GM13976 (cell line): ENCODE measurements at regions of chr17 and their contacts with region 1.

Region 1: DNA sequence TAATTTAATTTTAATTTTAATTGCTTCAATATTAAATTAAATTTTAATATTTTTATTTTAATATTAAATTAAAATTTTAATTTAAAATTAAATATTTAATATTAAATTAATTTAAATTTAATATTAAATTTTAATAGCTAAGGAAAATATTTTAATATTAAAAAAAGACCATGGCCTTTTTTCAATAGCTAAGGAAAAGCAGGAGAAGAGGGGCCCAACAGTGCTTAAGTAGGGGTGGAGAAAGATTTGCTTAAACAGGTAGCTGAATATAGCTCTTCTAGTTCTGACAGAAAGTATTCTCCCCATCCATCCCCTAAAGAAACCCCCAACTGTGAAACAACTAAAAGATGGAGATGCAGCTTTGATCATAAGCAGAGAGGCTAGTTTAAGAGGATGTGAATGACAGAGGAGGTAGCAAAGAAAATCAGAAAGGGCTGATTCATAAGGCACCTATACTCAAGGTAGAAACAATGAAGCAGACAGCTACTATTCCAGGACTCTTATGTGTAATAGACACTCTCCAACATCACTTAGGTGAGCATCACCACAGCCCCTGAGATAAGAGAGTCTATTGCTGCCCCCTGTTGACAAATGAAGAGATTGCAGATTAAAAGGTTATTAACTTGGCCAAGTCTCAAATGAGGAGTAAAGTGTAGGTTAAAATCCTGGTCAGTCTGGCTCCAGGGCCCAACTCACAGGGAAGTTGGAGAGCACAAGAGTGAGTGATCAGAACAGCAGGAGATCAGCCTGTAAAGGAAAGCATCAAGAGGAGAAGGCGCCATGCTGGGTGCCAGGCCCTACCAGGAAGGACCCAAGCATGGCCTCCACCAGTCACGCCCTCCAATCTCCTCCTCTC is 7.8 kb upstream of the RNASEK start:
- DNase-seq: peak; percentile 76
- CTCF ChIP-seq: peak; percentile 57

Region 2: DNA sequence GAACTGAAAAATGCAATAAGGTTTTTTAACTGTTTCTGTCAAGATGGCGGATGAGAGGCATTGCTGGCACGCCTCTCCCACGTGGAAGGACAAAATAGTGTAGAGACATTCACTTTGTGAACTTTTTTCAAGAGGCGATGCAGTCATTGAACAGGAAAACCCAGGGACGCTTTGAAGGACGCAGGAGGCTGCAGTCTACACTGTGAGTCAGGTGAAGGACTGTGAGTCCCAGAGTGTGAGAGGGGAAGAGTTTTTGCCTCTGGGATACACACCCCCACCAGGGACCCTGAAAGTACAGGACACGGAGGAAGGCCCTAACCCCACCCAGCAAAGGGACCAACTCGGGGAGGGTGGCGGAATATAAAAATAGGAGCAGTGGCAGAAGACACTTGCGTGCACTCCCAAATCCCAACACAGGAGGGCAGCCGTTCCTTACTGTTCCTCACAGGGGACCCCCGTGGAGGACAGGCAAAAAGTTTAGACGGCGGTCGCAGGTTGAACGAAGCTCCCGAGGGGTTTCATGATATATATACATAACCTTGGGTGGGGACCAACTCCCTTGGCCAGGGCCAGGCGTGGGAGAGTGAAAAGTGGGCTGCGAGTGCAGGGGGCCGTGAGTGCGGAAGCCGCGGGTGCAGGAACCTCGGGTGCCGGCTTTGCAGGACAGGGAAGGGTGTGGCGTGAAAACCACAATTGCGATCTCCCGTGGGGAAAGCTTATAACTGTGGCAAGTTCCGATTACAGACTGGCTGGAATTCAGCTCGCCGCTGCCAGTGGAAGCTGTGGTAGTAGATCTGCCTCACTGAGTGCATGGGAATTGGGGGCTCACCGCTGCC is 90.8 kb before region 1 on chr17:
- in situ Hi-C with region 1: loop called (anchors 5 kb)
- DNase-seq: peak; percentile 82
- CTCF ChIP-seq: peak; percentile 80